Caco-2 (cell line): ENCODE measurements at regions of chr6 and their contacts with region 1.

Region 1: GRCh38 chr6:81625216-81625615 is 127.3 kb downstream of the TENT5A start:
- DNase-seq: no peak
- H3K4me3 ChIP-seq: no peak overlapping the region
- H3K4me3 Mint-ChIP-seq: no peak overlapping the region
- H3K27ac Mint-ChIP-seq: no peak overlapping the region
- H3K4me1 ChIP-seq: peaks cover 43% of the 10 kb centered on the region
- H3K4me1 Mint-ChIP-seq: peaks cover 34% of the 10 kb centered on the region
- H3K27me3 ChIP-seq: no peaks in the 10 kb centered on the region
- H3K27me3 Mint-ChIP-seq: no peaks in the 10 kb centered on the region
- CTCF ChIP-seq: no peak

Region 2: GRCh38 chr6:81401970-81402690 is 223.1 kb before region 1 on chr6:
- CTCF ChIA-PET with region 1: no interaction called
- POLR2A ChIA-PET with region 1: no interaction called
- intact Hi-C with region 1: no loop called
- DNase-seq: no peak
- H3K4me3 ChIP-seq: no peak overlapping the region
- H3K4me3 Mint-ChIP-seq: no peak overlapping the region
- H3K27ac Mint-ChIP-seq: no peak overlapping the region
- H3K4me1 ChIP-seq: no peaks in the 10 kb centered on the region
- H3K4me1 Mint-ChIP-seq: no peaks in the 10 kb centered on the region
- H3K27me3 ChIP-seq: no peaks in the 10 kb centered on the region
- H3K27me3 Mint-ChIP-seq: no peaks in the 10 kb centered on the region
- CTCF ChIP-seq: no peak

Region 3: DNA sequence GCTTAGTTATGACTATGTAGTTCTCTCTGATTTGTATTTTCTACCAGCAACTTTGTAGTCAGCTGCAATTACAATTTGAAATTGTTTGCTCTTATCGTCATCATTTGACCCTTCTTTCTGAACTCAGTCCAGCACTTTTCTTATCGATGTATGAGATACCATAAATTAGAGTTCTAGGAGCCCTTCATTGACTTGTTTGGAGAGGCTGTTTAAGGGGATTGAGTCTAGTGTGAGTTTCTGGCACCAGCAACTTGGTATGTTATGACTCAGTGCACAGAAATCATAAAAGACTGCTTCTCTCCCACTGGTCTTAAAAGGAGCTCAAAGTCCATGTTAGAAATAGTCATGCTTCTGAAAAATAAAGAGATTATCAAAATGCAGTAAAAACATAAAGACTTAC is 63.0 kb before region 1 on chr6:
- CTCF ChIA-PET with region 1: no interaction called
- POLR2A ChIA-PET with region 1: no interaction called
- intact Hi-C with region 1: loop called (anchors 1 kb)
- DNase-seq: peak; percentile 60 to 64
- H3K4me3 ChIP-seq: no peak overlapping the region
- H3K4me3 Mint-ChIP-seq: peak overlapping the region; percentile 59
- H3K27ac Mint-ChIP-seq: peak overlapping the region; percentile 51
- H3K4me1 ChIP-seq: peaks cover 57% of the 10 kb centered on the region
- H3K4me1 Mint-ChIP-seq: peaks cover 8% of the 10 kb centered on the region
- H3K27me3 ChIP-seq: no peaks in the 10 kb centered on the region
- H3K27me3 Mint-ChIP-seq: no peaks in the 10 kb centered on the region
- CTCF ChIP-seq: no peak

Region 4: DNA sequence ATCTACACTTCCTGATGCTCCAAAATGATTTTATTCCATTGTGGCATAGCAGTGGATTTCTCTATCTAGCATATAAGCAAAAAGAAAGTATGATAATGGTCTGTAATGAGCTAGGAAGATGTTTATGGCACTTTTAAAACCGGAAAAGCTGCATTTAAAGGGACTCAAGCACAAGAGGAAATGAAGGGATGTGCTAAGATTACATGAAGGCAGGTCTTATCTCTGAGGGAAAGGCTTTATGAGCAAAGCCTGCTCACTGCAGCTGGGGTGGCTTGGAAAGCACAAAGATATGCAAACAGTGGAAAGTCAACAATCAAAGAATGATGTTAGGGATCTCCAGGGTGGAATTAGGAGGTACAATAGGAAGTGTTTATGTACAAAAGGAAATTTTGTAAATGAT is 10.9 kb before region 1 on chr6:
- CTCF ChIA-PET with region 1: no interaction called
- POLR2A ChIA-PET with region 1: no interaction called
- intact Hi-C with region 1: loop called (anchors 1 kb)
- DNase-seq: peak; percentile 67 to 72
- H3K4me3 ChIP-seq: no peak overlapping the region
- H3K4me3 Mint-ChIP-seq: peak overlapping the region; percentile 20
- H3K27ac Mint-ChIP-seq: peak overlapping the region; percentile 65
- H3K4me1 ChIP-seq: peaks cover 29% of the 10 kb centered on the region
- H3K4me1 Mint-ChIP-seq: peaks cover 22% of the 10 kb centered on the region
- H3K27me3 ChIP-seq: no peaks in the 10 kb centered on the region
- H3K27me3 Mint-ChIP-seq: no peaks in the 10 kb centered on the region
- CTCF ChIP-seq: no peak

Region 5: GRCh38 chr6:81636930-81637568 is 11.8 kb after region 1 on chr6:
- CTCF ChIA-PET with region 1: no interaction called
- POLR2A ChIA-PET with region 1: no interaction called
- intact Hi-C with region 1: loop called (anchors 1 kb)
- DNase-seq: peak in 1 of 2 experiments; percentile 53
- H3K4me3 ChIP-seq: no peak overlapping the region
- H3K4me3 Mint-ChIP-seq: no peak overlapping the region
- H3K27ac Mint-ChIP-seq: peak overlapping the region; percentile 81
- H3K4me1 ChIP-seq: peaks cover 14% of the 10 kb centered on the region
- H3K4me1 Mint-ChIP-seq: peaks cover 26% of the 10 kb centered on the region
- H3K27me3 ChIP-seq: no peaks in the 10 kb centered on the region
- H3K27me3 Mint-ChIP-seq: no peaks in the 10 kb centered on the region
- CTCF ChIP-seq: no peak

Region 6: GRCh38 chr6:81696482-81696881 is 71.3 kb after region 1 on chr6:
- CTCF ChIA-PET with region 1: no interaction called
- POLR2A ChIA-PET with region 1: no interaction called
- intact Hi-C with region 1: loop called (anchors 2 kb)
- DNase-seq: peak; percentile 29 to 38
- H3K4me3 ChIP-seq: no peak overlapping the region
- H3K4me3 Mint-ChIP-seq: no peak overlapping the region
- H3K27ac Mint-ChIP-seq: no peak overlapping the region
- H3K4me1 ChIP-seq: peaks cover 27% of the 10 kb centered on the region
- H3K4me1 Mint-ChIP-seq: peaks cover 17% of the 10 kb centered on the region
- H3K27me3 ChIP-seq: no peaks in the 10 kb centered on the region
- H3K27me3 Mint-ChIP-seq: no peaks in the 10 kb centered on the region
- CTCF ChIP-seq: no peak

Region 7: DNA sequence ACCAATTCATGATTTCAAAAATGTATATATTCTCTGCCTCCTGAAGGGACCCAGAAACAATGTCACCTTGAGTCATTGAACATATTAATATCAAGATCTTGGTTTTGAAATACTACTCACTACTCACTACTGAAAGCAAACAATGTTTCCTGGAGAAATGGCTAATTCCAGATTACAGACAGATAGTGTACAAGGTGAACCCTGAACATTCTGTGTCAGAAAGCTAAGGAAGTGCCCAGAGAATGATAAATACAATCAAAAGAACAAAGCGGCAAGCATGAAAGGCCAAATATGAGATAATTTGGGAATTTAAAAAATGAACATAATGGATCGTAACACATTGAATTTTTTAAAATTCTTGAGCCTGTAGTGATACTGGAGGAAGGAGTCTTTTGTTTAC is 228.8 kb after region 1 on chr6:
- CTCF ChIA-PET with region 1: no interaction called
- POLR2A ChIA-PET with region 1: no interaction called
- intact Hi-C with region 1: loop called (anchors 5 kb)
- DNase-seq: peak in 1 of 2 experiments; percentile 63
- H3K4me3 ChIP-seq: no peak overlapping the region
- H3K4me3 Mint-ChIP-seq: peak overlapping the region; percentile 58
- H3K27ac Mint-ChIP-seq: peak overlapping the region; percentile 87
- H3K4me1 ChIP-seq: peaks cover 51% of the 10 kb centered on the region
- H3K4me1 Mint-ChIP-seq: peaks cover 37% of the 10 kb centered on the region
- H3K27me3 ChIP-seq: no peaks in the 10 kb centered on the region
- H3K27me3 Mint-ChIP-seq: no peaks in the 10 kb centered on the region
- CTCF ChIP-seq: no peak

Region 8: GRCh38 chr6:82144007-82144851 is 519.0 kb after region 1 on chr6:
- CTCF ChIA-PET with region 1: no interaction called
- POLR2A ChIA-PET with region 1: no interaction called
- intact Hi-C with region 1: loop called (anchors 10 kb)
- DNase-seq: peak; percentile 71 to 81
- H3K4me3 ChIP-seq: no peak overlapping the region
- H3K4me3 Mint-ChIP-seq: peak overlapping the region; percentile 67
- H3K27ac Mint-ChIP-seq: peak overlapping the region; percentile 90
- H3K4me1 ChIP-seq: peaks cover 34% of the 10 kb centered on the region
- H3K4me1 Mint-ChIP-seq: peaks cover 18% of the 10 kb centered on the region
- H3K27me3 ChIP-seq: no peaks in the 10 kb centered on the region
- H3K27me3 Mint-ChIP-seq: no peaks in the 10 kb centered on the region
- CTCF ChIP-seq: no peak